ENCODE measurements at regions of chr3 and their contacts with region 1.

Region 1: DNA sequence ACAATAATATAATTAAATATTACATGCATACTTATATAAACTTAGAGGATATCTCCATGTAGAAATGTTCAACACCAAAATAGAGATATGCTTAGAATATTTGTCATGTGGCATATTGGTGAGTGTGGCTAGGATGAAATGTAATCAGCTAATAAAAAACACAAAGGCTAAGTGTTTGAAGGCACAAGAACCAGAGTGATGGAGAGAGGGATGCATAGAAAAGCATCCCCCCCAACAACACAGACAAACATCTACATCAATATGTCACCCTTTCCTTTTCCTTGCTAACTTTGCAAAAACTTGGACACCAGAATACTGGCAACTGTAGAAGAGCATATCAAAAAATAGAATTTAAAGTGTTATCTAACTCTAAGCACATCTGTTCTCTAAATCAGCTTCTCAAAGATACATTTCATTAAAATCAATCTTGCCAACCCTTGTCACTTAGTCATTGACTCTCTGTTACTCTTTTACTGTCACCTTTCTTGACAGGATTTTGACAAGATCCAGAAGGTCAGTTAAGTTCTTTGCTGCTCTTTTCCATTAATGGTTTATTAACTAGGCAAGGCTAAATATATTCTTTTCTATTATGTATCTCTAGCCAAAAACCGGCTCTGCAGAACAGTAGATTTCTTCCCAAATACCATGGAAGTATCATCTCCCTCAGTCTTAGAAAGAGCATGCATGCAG is 695.9 kb downstream of the OTOL1 start:
- DNase-seq: no peak
- ATAC-seq: peak; percentile 72

Region 2: GRCh38 chr3:161220850-161221753 is 971.4 kb before region 1 on chr3 and contains the start of gene NMD3:
- intact Hi-C with region 1: no loop called
- DNase-seq: peak; percentile 97
- ATAC-seq: peak; percentile 98
- total RNA-seq, gene NMD3: 49.0 TPM

Region 3: DNA sequence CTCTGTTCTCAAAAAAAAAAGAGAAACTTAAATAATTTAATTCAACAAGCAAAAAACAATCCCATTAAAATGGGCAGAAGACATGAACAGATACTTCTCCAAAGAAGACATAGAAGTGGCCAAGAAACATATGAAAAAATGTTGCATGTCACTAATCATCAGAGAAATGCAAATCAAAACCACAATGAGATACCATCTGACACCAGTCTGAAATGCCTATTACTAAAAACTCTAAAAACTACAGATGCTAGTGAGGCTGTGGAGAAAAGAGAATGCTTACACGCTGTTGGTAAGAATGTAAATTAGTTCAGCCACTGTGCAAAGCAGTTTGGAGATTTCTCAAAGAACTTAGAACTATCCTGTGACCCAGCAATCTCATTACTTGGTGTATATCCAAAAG is 313.0 kb before region 1 on chr3:
- intact Hi-C with region 1: no loop called
- DNase-seq: no peak
- ATAC-seq: no peak

Region 4: DNA sequence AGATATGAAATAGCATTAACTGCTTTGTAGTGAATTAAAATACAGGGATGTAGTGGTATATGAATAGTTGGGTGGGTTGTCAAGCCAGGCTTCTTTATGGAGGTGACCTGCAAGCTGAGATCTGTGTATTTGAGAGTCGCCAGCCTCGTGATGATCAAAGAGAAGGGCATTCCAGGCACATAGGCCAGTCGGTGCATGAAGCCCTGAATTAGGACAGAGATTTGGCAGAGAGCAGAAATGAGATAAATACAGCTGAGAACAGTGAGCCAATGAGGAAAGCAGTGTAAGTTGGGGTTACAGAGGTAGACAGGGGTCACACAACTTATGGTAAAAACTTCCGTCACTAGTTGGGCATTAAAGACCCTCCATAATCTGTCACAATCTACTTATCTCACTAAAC is 54.0 kb before region 1 on chr3:
- intact Hi-C with region 1: loop called (anchors 5 kb)
- DNase-seq: no peak
- ATAC-seq: peak; percentile 93

Measured in Right ventricle myocardium inferior (tissue), 1 donor.